Head of caudate nucleus (tissue), 42 donors: ENCODE measurements at regions of chr1 and their contacts with region 1.

Region 1: DNA sequence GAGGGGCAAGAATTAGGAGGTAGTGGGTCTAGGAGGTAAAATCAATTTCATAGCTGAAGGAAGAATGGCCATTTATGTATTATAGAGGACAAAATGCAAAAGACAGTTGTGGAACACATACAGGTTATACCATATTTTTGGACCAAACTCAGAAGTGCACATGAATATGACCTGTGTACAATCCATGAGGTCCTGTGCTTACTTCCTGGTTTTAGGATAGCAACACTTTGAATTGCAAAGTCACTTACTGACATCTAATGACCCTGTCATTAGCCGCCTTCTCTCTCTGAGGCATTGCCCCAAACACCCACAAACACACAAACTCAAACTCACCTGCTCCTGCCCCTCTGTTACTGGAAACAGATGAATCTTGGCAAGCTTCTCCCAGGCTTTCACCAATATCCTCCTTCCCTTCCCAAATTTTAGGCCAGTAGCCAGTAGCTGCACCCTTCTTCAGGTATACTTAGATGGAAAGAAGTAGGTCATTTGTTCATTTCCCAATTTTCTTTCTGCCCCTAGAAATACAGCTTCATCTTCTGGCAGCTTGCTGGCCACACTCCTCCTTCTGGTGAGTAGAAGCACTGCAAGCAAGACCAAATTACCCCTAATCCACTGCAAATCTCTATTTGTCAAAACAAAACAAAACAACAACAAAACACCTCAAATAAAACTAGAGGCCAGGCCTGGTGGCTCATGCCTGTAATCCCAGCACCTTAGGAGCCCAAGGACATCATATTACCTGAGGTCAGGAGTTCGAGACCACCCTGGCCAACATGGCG is 13.7 kb upstream of the RPL5 start:
- DNase-seq: peak in 6 of 42 donors; percentile 15 to 66 (median 34)

Region 2: GRCh38 chr1:92749024-92749634 is 69.0 kb before region 1 on chr1:
- intact Hi-C with region 1: loop called (anchors 10 kb)
- DNase-seq: peak in 34 of 42 donors; percentile 17 to 81 (median 51)